ENCODE measurements at regions of chr7 and their contacts with region 1.

Region 1: GRCh38 chr7:99918959-99919813 is at the start of gene TRIM4:
- DNase-seq: peak; percentile 93
- H3K4me3 Mint-ChIP-seq: peak within 1 kb of the TSS; percentile 95
- H3K27ac Mint-ChIP-seq: peak within 1 kb of the TSS; percentile 96
- H3K4me1 Mint-ChIP-seq: peaks cover 35% of the 10 kb centered on the region
- H3K27me3 Mint-ChIP-seq: no peaks in the 10 kb centered on the region
- CTCF ChIP-seq: no peak
- total RNA-seq, gene TRIM4: 28.1 and 28.2 TPM in 2 replicates

Region 2: GRCh38 chr7:99558306-99559174 is 360.6 kb before region 1 on chr7 and contains the start of gene ZNF655:
- CTCF ChIA-PET with region 1: no interaction called
- POLR2A ChIA-PET with region 1: interaction called, 11 read pairs
- intact Hi-C with region 1: no loop called
- DNase-seq: peak; percentile 85
- H3K4me3 Mint-ChIP-seq: peak within 1 kb of the TSS; percentile 85
- H3K27ac Mint-ChIP-seq: peak within 1 kb of the TSS; percentile 86
- H3K4me1 Mint-ChIP-seq: peaks cover 33% of the 10 kb centered on the region
- H3K27me3 Mint-ChIP-seq: no peaks in the 10 kb centered on the region
- CTCF ChIP-seq: no peak
- total RNA-seq, gene ZNF655: 85.2 and 89.9 TPM in 2 replicates

Region 3: GRCh38 chr7:99631295-99632109 is 287.7 kb before region 1 on chr7:
- CTCF ChIA-PET with region 1: interaction called, 12 read pairs
- POLR2A ChIA-PET with region 1: interaction called, 9 read pairs
- intact Hi-C with region 1: no loop called
- DNase-seq: peak; percentile 61
- H3K4me3 Mint-ChIP-seq: no peak overlapping the region
- H3K27ac Mint-ChIP-seq: peak overlapping the region; percentile 84
- H3K4me1 Mint-ChIP-seq: peaks cover 21% of the 10 kb centered on the region
- H3K27me3 Mint-ChIP-seq: no peaks in the 10 kb centered on the region
- CTCF ChIP-seq: peak; percentile 64

Region 4: DNA sequence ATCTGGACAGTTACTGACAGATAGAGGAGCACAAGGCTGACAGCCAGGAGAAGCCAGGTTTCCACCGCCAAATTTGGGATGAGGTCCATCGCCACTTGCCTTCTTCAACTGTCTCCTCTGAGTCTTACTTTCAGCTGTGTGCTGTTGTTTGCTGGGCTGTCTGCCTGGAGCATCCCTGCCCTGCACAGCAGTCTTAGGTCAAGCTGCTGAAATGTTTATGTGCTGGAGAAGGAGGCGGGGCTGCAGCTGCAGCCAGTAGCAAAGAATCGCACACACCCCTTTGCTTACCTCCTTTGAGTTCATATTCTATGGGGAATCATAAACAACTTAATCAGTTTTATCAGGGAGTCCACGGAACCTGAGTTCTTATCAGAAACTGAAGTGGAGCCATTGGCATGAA is 219.2 kb before region 1 on chr7:
- CTCF ChIA-PET with region 1: no interaction called
- POLR2A ChIA-PET with region 1: no interaction called
- intact Hi-C with region 1: no loop called
- DNase-seq: no peak
- H3K4me3 Mint-ChIP-seq: no peak overlapping the region
- H3K27ac Mint-ChIP-seq: no peak overlapping the region
- H3K4me1 Mint-ChIP-seq: peaks cover 14% of the 10 kb centered on the region
- H3K27me3 Mint-ChIP-seq: no peaks in the 10 kb centered on the region
- CTCF ChIP-seq: no peak

Region 5: GRCh38 chr7:99943641-99944496 is 24.7 kb after region 1 on chr7:
- CTCF ChIA-PET with region 1: interaction called, 8 read pairs
- POLR2A ChIA-PET with region 1: interaction called, 16 read pairs
- intact Hi-C with region 1: no loop called
- DNase-seq: no peak
- H3K4me3 Mint-ChIP-seq: no peak overlapping the region
- H3K27ac Mint-ChIP-seq: no peak overlapping the region
- H3K4me1 Mint-ChIP-seq: no peaks in the 10 kb centered on the region
- H3K27me3 Mint-ChIP-seq: peaks cover 14% of the 10 kb centered on the region
- CTCF ChIP-seq: no peak

Region 6: DNA sequence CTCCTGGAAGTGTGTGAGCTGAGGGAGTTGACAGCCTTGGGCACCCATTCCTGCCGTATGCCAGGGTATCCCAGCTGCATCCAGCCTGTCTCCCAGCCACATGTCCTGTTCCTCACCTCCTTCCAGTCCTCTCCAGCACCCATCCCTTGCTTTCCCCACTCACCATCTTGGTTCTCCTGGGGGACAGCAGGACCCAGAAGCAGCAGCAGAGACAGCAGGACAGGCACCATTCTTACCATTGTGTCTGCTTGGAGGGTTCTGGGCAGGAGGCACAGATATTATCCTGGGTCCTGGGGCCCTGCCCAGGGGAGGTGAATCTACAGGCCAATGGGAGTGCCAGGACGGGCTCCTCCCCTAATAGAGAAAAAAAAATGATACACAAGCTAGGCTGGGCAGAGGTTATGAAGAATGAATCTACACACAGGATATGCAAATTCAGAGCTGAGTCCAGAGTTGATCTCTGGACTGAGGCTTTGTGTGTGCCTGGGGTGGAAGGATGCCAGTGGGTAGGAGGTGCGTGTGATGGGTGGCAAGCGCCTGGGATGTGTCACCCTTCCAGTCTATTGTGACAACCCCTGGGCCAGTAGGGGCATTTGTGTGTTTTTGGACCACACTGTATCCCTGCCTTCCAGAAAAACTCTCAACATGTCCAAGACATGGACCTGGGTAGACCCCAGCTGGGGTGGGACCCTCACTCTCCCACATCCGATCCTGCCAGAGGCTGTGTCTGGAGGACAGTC is 56.8 kb after region 1 on chr7 and contains the start of gene AZGP1:
- CTCF ChIA-PET with region 1: interaction called, 26 read pairs
- POLR2A ChIA-PET with region 1: interaction called, 3 read pairs
- intact Hi-C with region 1: no loop called
- DNase-seq: peak; percentile 33
- H3K4me3 Mint-ChIP-seq: no peak within 1 kb of the TSS
- H3K27ac Mint-ChIP-seq: no peak within 1 kb of the TSS
- H3K4me1 Mint-ChIP-seq: peaks cover 13% of the 10 kb centered on the region
- H3K27me3 Mint-ChIP-seq: no peaks in the 10 kb centered on the region
- CTCF ChIP-seq: no peak
- total RNA-seq, gene AZGP1: 0.58 and 0.59 TPM in 2 replicates

Region 7: GRCh38 chr7:100015232-100016209 is 96.3 kb after region 1 on chr7 and contains the start of gene ZKSCAN1:
- CTCF ChIA-PET with region 1: interaction called, 4 read pairs
- POLR2A ChIA-PET with region 1: interaction called, 23 read pairs
- intact Hi-C with region 1: no loop called
- DNase-seq: peak; percentile 95
- H3K4me3 Mint-ChIP-seq: peak within 1 kb of the TSS; percentile 80
- H3K27ac Mint-ChIP-seq: peak within 1 kb of the TSS; percentile 76
- H3K4me1 Mint-ChIP-seq: peaks cover 12% of the 10 kb centered on the region
- H3K27me3 Mint-ChIP-seq: no peaks in the 10 kb centered on the region
- CTCF ChIP-seq: no peak
- total RNA-seq, gene ZKSCAN1: 80.2 and 86.2 TPM in 2 replicates

Region 8: GRCh38 chr7:100081535-100082102 is 162.4 kb after region 1 on chr7 and contains the start of gene ZNF3:
- CTCF ChIA-PET with region 1: interaction called, 4 read pairs
- POLR2A ChIA-PET with region 1: interaction called, 8 read pairs
- intact Hi-C with region 1: loop called (anchors 10 kb)
- DNase-seq: peak; percentile 99
- H3K4me3 Mint-ChIP-seq: peak within 1 kb of the TSS; percentile 84
- H3K27ac Mint-ChIP-seq: peak within 1 kb of the TSS; percentile 74
- H3K4me1 Mint-ChIP-seq: peaks cover 6% of the 10 kb centered on the region
- H3K27me3 Mint-ChIP-seq: no peaks in the 10 kb centered on the region
- CTCF ChIP-seq: peak; percentile 82
- total RNA-seq, gene ZNF3: 23.7 and 24.8 TPM in 2 replicates